Mammary epithelial cell (primary cell): ENCODE measurements at regions of chr20 and their contacts with region 1.

Region 1: GRCh38 chr20:38229376-38230252 is 30.9 kb downstream of the KIAA1755 start:
- DNase-seq: no peak
- H3K4me3 ChIP-seq: no peak overlapping the region
- H3K27ac ChIP-seq: no peak overlapping the region
- H3K4me1 ChIP-seq: peaks cover 9% of the 10 kb centered on the region
- H3K27me3 ChIP-seq: no peaks in the 10 kb centered on the region
- CTCF ChIP-seq: peak; percentile 53 to 65

Region 2: DNA sequence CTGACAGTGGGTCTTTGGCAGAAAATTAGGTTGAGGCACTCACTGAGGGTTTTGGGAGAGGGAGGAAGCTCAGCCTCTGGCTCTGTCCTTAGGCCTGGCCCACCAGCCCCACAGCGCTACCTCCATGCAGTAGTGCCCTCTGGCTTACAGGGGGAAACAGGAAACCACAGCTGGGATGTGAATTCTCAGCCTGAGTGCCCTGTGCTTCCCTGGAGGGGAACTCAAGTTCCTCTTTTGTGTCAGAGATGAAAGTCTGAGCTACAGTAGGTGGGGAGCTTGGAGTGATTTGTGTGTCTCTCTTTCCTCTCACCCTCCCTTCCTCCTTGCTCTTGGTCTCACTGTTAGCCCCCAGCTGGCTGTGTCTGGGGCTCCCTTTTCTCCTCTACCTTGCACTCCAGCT is 653.7 kb before region 1 on chr20:
- CTCF ChIA-PET with region 1: no interaction called
- dilution Hi-C with region 1: loop called (anchors 25 kb)
- in situ Hi-C with region 1: loop called in 1 of 2 experiments (anchors 25 kb)
- intact Hi-C with region 1: no loop called
- DNase-seq: no peak
- H3K4me3 ChIP-seq: no peak overlapping the region
- H3K27ac ChIP-seq: no peak overlapping the region
- H3K4me1 ChIP-seq: no peaks in the 10 kb centered on the region
- H3K27me3 ChIP-seq: no peaks in the 10 kb centered on the region
- CTCF ChIP-seq: no peak

Region 3: GRCh38 chr20:38073307-38074071 is 156.1 kb before region 1 on chr20:
- CTCF ChIA-PET with region 1: no interaction called
- dilution Hi-C with region 1: loop called (anchors 5 kb)
- in situ Hi-C with region 1: loop called in 1 of 2 experiments (anchors 5 kb)
- intact Hi-C with region 1: no loop called
- DNase-seq: peak; percentile 78
- H3K4me3 ChIP-seq: no peak overlapping the region
- H3K27ac ChIP-seq: no peak overlapping the region
- H3K4me1 ChIP-seq: peaks cover 8% of the 10 kb centered on the region
- H3K27me3 ChIP-seq: no peaks in the 10 kb centered on the region
- CTCF ChIP-seq: peak; percentile 79 to 90

Region 4: DNA sequence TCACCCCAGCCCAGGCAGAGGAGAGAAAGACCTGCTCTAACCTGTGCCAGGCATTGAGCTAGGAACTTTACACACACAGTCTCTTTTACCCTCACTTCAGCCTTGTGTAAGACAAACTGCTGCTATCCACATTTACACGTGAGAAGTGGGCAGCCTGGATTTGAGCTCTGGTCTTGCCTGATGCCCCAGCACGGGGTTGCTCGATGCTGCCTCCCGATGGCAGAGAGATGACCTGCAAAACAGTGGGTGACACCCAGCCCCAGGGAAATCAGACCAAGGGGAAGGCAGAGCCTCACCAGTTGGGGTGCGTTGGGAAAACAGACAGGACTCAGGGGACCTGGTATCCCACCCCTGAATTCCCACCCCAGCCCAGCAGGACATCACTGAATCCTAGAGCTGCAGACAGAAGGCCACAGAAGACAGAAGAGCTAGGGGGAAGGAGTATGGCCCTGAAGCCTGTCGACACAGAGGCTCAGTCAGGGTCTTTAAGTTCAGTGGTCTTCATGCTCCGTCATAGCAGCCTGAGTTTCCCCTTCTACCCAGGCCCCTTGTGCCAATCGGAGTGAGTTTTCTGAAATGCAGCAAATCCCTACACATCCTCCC is 75.3 kb after region 1 on chr20:
- CTCF ChIA-PET with region 1: no interaction called
- dilution Hi-C with region 1: no loop called
- in situ Hi-C with region 1: loop called (anchors 5 to 10 kb)
- intact Hi-C with region 1: loop called (anchors 1 kb)
- DNase-seq: peak; percentile 30
- H3K4me3 ChIP-seq: no peak overlapping the region
- H3K27ac ChIP-seq: no peak overlapping the region
- H3K4me1 ChIP-seq: peaks cover 12% of the 10 kb centered on the region
- H3K27me3 ChIP-seq: no peaks in the 10 kb centered on the region
- CTCF ChIP-seq: peak; percentile 61 to 85

Region 5: GRCh38 chr20:38412877-38413577 is 183.4 kb after region 1 on chr20:
- CTCF ChIA-PET with region 1: no interaction called
- dilution Hi-C with region 1: no loop called
- in situ Hi-C with region 1: no loop called
- intact Hi-C with region 1: loop called (anchors 1 kb)
- DNase-seq: no peak
- H3K4me3 ChIP-seq: no peak overlapping the region
- H3K27ac ChIP-seq: no peak overlapping the region
- H3K4me1 ChIP-seq: no peaks in the 10 kb centered on the region
- H3K27me3 ChIP-seq: no peaks in the 10 kb centered on the region
- CTCF ChIP-seq: no peak